ENCODE measurements at regions of chr3 and their contacts with region 1.

Region 1: DNA sequence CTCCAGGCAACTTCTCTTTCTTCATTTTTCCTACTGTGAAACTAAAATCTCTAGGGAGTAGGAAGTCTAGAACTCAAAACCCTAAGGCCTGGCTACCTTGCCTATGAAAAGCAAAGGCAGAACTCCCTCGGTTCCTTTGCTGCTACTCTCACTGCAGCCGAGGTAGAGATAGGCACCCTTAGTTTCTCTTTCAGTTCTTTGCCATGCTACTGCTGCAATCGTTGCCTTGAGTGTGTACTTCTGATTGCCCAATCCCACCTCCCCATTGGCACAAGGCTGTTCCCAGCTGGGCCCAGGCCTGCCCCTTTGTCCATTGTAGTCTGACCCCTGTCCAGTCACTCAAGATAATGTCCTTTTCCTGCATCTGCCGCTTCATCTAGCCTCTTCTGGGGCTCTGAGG is 92.3 kb upstream of the MRPS22 start:
- DNase-seq: peak; percentile 49 to 74 (median 66)
- H3K4me3 ChIP-seq: no peak overlapping the region
- H3K27ac ChIP-seq: peak overlapping the region in 1 of 2 donors; percentile 37
- H3K4me1 ChIP-seq: peaks cover 37% of the 10 kb centered on the region
- H3K27me3 ChIP-seq: no peaks in the 10 kb centered on the region
- CTCF ChIP-seq: no peak
- EP300 ChIP-seq: no peak
- POLR2A ChIP-seq: no peak

Region 2: GRCh38 chr3:139302084-139302800 is 50.7 kb after region 1 on chr3:
- intact Hi-C with region 1: loop called in 1 of 4 experiments (anchors 5 kb)
- DNase-seq: peak in 2 of 5 donors; percentile 49 to 59
- H3K4me3 ChIP-seq: no peak overlapping the region
- H3K27ac ChIP-seq: no peak overlapping the region
- H3K4me1 ChIP-seq: peaks cover 22% of the 10 kb centered on the region
- H3K27me3 ChIP-seq: no peaks in the 10 kb centered on the region
- CTCF ChIP-seq: no peak
- EP300 ChIP-seq: no peak
- POLR2A ChIP-seq: no peak

Region 3: DNA sequence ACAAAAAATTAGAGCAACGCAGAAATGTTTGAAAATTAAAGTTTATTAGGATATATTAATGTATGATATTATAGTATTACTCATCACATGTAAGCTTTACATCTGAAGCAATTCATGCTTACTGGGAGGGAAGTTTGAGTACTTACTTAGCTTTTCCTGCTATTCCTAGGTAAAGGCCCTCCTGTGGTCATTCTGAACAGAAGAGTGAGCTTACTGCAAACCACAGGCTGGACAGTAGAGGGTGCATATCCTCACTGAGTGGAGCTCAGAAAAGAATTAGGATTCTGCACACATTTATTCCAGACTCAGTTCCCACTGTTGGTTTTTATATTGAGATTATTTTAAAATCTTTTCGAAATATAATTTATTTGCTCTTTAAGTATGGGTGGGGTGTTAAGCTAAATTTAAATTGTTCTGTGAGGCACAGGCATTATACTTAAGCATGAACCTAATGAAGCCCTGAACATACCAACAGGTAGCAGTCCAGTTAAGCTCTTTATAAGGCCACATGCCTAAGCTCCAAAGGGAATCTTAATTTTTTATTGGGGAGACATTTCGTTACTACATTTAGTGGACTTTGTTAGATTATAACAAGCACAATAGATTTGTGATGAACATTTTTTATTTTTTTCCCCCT is 102.5 kb after region 1 on chr3:
- intact Hi-C with region 1: no loop called
- DNase-seq: no peak
- H3K4me3 ChIP-seq: no peak overlapping the region
- H3K27ac ChIP-seq: no peak overlapping the region
- H3K4me1 ChIP-seq: no peaks in the 10 kb centered on the region
- H3K27me3 ChIP-seq: no peaks in the 10 kb centered on the region
- CTCF ChIP-seq: no peak
- EP300 ChIP-seq: no peak
- POLR2A ChIP-seq: no peak

Measured in ovary (tissue), 10 donors.